ENCODE measurements at regions of chr9 and their contacts with region 1.

Region 1: GRCh38 chr9:78582821-78583220 is 285.9 kb downstream of the PSAT1 start:
- DNase-seq: no peak

Region 2: DNA sequence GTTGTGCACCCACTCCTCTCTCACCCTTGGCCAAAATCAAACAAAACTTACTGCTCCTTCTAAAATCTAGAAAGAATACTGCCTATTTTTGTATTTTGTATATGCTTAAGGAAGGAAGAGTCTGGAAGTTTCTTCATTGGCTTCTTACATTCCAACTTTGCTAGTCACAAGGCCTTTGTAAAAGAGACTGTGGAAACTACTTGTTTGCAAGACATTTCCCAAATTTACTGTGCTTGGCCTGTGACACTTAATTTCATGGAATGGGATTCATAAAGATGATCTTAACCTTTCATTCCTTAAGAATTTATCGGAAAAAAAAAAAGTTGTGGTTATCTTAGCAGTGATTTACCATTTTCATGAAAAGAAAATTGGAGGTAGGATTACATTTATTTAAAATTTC is 1196.6 kb before region 1 on chr9:
- intact Hi-C with region 1: no loop called
- DNase-seq: no peak

Region 3: DNA sequence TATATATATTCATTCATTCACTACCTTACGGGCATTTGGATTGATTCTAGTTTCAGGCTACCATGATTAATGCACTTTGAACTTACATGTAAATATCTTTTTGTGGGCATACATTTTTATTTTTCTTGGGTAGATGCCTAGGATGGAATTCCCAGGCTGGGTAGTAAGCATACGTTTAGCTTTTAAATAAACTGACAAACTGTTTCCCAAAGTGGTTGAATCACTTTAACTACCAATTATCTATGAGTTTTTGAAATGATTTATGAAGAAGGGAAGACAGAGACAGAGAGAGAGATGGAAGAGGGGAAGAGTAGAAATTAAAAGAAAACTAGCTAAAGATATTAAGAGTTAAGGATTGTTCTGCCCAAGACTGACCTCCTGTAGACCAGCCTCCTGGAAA is 326.7 kb after region 1 on chr9:
- intact Hi-C with region 1: loop called in 1 of 2 experiments (anchors 5 kb)
- DNase-seq: no peak

Region 4: GRCh38 chr9:79512249-79512648 is 929.4 kb after region 1 on chr9:
- intact Hi-C with region 1: no loop called
- DNase-seq: no peak

Measured in posterior vena cava (tissue), 2 donors.